ENCODE measurements at regions of chr14 and their contacts with region 1.

Region 1: DNA sequence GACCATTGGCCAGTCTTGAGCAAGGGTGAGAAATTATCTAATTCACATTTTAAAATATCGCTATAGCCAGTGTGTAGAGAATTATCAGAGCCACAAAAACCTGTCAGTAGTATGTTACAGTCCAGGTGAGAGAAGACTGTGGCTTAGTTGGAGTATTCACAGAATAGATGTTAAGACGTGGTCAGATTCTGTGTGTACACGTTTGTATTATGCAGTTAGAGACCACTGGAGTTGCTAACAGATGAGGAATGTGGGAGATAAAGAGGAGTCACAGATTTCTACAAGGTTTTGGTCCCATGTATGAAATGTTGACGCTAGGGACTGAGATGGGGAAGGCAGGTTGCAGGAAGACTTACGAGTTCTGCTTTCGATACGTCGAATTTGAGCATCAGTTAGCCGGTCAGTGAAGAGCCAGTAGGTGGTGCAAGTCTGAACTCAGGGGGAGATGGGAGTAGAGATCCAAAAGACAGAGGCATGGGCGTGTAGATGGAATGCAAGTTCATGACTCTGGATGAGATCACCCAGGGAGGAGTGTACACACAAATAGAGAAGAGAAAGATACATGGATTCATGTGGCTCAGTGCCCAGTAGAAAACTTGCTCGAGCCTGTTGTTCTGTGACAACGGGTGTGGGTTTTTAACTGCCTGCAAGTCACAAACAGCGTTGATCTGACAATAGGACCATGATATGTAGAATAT is 114.8 kb upstream of the FLRT2 start:
- DNase-seq: peak; percentile 99
- H3K4me3 Mint-ChIP-seq: peak overlapping the region; percentile 60
- H3K27ac Mint-ChIP-seq: peak overlapping the region; percentile 32
- H3K4me1 Mint-ChIP-seq: peaks cover 33% of the 10 kb centered on the region
- H3K27me3 Mint-ChIP-seq: no peaks in the 10 kb centered on the region
- CTCF ChIP-seq: peak; percentile 46

Region 2: GRCh38 chr14:85178864-85179263 is 236.3 kb before region 1 on chr14:
- CTCF ChIA-PET with region 1: no interaction called
- POLR2A ChIA-PET with region 1: no interaction called
- intact Hi-C with region 1: no loop called
- DNase-seq: no peak
- H3K4me3 Mint-ChIP-seq: no peak overlapping the region
- H3K27ac Mint-ChIP-seq: no peak overlapping the region
- H3K4me1 Mint-ChIP-seq: no peaks in the 10 kb centered on the region
- H3K27me3 Mint-ChIP-seq: no peaks in the 10 kb centered on the region
- CTCF ChIP-seq: no peak

Region 3: GRCh38 chr14:85195872-85196477 is 219.2 kb before region 1 on chr14:
- CTCF ChIA-PET with region 1: no interaction called
- POLR2A ChIA-PET with region 1: no interaction called
- intact Hi-C with region 1: loop called (anchors 10 kb)
- DNase-seq: peak; percentile 38
- H3K4me3 Mint-ChIP-seq: no peak overlapping the region
- H3K27ac Mint-ChIP-seq: no peak overlapping the region
- H3K4me1 Mint-ChIP-seq: no peaks in the 10 kb centered on the region
- H3K27me3 Mint-ChIP-seq: no peaks in the 10 kb centered on the region
- CTCF ChIP-seq: peak; percentile 42

Region 4: GRCh38 chr14:85233756-85234155 is 181.4 kb before region 1 on chr14:
- CTCF ChIA-PET with region 1: no interaction called
- POLR2A ChIA-PET with region 1: interaction called, 3 read pairs
- intact Hi-C with region 1: loop called (anchors 10 kb)
- DNase-seq: peak; percentile 79
- H3K4me3 Mint-ChIP-seq: peak overlapping the region; percentile 71
- H3K27ac Mint-ChIP-seq: peak overlapping the region; percentile 75
- H3K4me1 Mint-ChIP-seq: peaks cover 23% of the 10 kb centered on the region
- H3K27me3 Mint-ChIP-seq: no peaks in the 10 kb centered on the region
- CTCF ChIP-seq: no peak

Region 5: GRCh38 chr14:85437148-85437547 is 22.0 kb after region 1 on chr14:
- CTCF ChIA-PET with region 1: no interaction called
- POLR2A ChIA-PET with region 1: interaction called, 16 read pairs
- intact Hi-C with region 1: loop called (anchors 2 kb)
- DNase-seq: peak; percentile 85
- H3K4me3 Mint-ChIP-seq: no peak overlapping the region
- H3K27ac Mint-ChIP-seq: peak overlapping the region; percentile 66
- H3K4me1 Mint-ChIP-seq: peaks cover 25% of the 10 kb centered on the region
- H3K27me3 Mint-ChIP-seq: no peaks in the 10 kb centered on the region
- CTCF ChIP-seq: no peak

Region 6: GRCh38 chr14:85516239-85517112 is 101.3 kb after region 1 on chr14:
- CTCF ChIA-PET with region 1: no interaction called
- POLR2A ChIA-PET with region 1: no interaction called
- intact Hi-C with region 1: loop called (anchors 2 kb)
- DNase-seq: peak; percentile 80
- H3K4me3 Mint-ChIP-seq: peak overlapping the region; percentile 53
- H3K27ac Mint-ChIP-seq: peak overlapping the region; percentile 74
- H3K4me1 Mint-ChIP-seq: peaks cover 26% of the 10 kb centered on the region
- H3K27me3 Mint-ChIP-seq: no peaks in the 10 kb centered on the region
- CTCF ChIP-seq: no peak

Measured in MCF 10A (cell line).